Activated T-helper 1 cell treated with anti-CD3 and anti-CD28 coated beads, Interleukin-12 subunit alpha, Interleukin-12 subunit beta, Interleukin-2, Interleukin-4 antibody, amounts not matched to agents 30 ng/mL and 10 ng/mL and 1 ng/mL, durations not matched to agents 14 hours and 24 hours and 36 hours (primary cell): ENCODE measurements at regions of chr3 and their contacts with region 1.

Region 1: DNA sequence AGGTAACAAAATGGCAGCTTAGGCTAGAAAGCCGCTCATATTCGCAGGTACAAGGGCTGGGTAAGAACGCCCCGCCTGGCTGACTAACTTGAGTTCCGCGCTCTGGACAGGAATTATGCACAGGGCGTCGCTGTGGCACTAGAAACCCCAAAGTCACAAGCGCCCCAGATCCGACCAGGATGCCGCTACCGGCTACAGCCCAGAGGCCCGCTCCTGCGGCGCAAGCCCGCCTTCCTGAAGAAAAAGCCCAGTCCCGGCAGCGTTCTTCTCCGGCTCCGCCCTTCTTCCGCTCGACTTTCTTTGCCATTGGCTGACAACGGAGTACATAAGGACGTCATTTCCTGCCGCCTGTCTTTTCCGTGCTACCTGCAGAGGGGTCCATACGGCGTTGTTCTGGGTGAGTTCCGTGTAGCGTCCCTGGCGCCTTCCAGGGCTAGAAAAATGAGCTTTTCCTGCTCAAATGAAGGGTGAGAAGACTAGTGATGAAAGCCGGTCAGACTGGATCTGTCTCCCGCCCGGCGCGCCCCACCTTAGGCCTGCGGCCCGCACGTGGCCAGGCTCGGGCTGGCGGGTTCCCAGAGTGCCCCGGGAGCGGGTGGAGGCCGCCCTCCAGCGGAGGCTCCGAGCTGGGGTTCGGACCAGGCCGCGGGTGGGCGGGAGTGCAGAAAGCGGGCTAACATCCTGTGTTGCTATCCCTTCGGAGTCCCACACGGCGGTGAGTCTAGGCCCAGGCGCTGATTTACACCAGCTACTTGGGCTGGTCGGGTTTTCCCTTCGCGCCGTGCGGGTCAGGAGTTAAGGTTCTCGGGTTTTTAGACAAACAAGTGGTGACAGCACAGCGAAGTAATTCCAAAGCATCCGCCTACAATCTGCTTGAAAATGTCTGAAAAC is at the start of gene RPSA:
- DNase-seq: peak; percentile 97
- H3K4me3 Mint-ChIP-seq: peak within 1 kb of the TSS; percentile 90
- H3K27ac Mint-ChIP-seq: peak within 1 kb of the TSS; percentile 96
- H3K4me1 Mint-ChIP-seq: peaks cover 53% of the 10 kb centered on the region
- H3K27me3 Mint-ChIP-seq: no peaks in the 10 kb centered on the region
- total RNA-seq, gene RPSA: 1,750 and 1,765 TPM in 2 replicates

Region 2: DNA sequence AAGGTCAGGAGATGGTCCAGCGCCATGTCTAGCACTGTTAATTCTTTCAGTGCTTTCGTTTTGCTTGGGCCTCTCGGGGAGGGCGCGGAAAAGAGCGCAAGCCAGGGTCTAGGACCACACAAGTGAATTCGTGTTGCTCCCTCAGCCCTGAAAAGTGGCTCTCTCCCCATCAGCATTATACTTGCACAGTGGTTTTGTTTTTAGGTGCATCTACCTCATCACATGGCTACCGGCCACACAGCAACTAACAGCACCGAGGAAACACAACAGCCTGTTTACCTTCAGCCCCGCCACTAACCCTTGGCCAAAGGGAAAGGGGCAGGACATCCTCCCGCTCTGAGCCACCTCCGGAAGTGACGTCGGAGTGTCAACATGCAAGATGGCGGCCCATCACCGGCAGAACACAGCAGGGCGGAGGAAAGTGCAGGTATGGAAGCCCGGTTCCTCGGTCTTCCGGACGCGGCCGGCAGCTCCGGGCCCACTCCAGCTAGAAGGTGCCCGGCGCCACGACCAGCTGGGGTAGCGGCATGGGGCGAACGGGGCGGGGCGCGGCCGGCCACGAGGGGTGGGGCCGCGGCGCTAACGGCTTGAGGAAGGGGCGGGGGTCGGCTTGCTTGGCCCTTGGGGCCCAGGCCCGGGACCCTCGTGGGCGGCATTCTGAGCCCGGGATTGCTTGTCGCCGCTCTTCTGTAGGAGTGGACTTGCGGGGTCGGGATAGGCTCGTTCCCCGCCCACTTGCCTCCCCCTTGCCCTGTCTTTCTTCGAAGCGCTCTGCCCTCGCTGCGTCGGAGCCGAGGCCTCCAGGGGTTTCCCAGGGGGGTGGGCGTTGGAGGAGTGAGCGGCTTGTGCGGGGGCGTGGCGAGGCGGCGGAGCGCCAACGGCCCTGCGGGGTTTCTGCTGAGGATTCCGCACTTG is 354.7 kb before region 1 on chr3 and contains the starts of genes SCN11A and WDR48:
- intact Hi-C with region 1: loop called (anchors 1 kb)
- DNase-seq: peak; percentile 91
- H3K4me3 Mint-ChIP-seq: peak within 1 kb of the TSS; percentile 93
- H3K27ac Mint-ChIP-seq: peak within 1 kb of the TSS; percentile 95
- H3K4me1 Mint-ChIP-seq: peaks cover 30% of the 10 kb centered on the region
- H3K27me3 Mint-ChIP-seq: no peaks in the 10 kb centered on the region
- total RNA-seq, gene SCN11A: 0.05 TPM in 1 of 2 replicates, not detected in the other
- total RNA-seq, gene WDR48: 40.6 and 41.5 TPM in 2 replicates

Region 3: DNA sequence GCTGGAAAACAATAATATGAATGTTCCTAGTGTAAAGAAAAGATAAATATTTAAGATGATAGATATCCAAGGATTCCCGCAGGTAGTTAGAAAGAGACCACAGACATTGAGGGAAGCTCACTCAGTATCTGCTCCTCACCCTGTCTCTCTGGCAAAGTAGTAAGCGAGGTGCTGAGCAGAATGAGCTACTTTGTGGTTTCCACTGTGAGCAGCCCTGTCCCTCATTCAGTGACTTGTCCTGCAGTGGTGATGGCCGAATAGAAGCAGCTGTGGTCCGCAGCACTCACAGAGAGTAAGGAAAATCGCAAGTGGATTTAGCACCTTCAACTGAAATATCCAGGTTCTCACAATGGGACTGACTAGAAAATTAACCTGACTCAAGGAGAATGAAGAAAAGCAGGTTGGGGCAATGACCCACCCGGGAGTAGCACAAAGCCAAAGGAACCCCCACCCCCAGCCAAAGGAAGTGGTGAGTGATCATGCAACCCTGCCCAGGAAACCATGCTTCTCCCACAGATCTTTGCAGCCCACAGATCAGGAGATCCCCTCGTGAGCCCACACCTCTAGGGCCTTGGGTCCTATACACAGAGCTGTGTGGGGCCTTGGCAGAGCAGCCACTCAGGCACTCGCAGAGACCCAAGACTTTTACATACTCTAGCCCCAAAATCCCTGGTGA is 45.2 kb before region 1 on chr3:
- intact Hi-C with region 1: loop called (anchors 1 kb)
- DNase-seq: peak; percentile 71
- H3K4me3 Mint-ChIP-seq: peak overlapping the region; percentile 69
- H3K27ac Mint-ChIP-seq: peak overlapping the region; percentile 85
- H3K4me1 Mint-ChIP-seq: peaks cover 75% of the 10 kb centered on the region
- H3K27me3 Mint-ChIP-seq: peaks cover 10% of the 10 kb centered on the region

Region 4: DNA sequence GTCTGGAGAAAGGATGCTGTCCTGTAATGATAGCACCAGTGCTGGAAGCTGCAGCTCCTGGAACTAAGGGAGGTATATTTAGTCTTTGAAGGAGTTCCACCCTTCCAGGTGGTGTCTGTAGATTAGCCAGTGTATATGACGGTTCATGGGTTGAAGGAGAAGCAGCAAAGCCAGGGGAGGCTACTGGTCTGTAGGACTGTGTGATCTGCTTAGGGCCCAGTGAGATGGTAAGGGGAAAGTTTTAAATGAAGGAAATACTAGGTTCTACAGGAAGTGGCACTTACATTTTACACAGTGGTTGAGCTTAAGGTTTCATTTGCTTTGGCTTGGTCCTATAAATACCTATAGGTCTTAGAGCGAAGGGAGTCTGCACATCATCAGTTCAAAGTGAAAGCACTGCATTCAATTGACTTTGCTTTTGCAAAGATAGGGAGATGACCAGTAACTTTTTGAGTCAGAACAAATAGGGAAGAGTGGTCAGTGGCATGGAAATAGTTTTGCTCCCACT is 17.8 kb before region 1 on chr3:
- intact Hi-C with region 1: loop called (anchors 1 kb)
- DNase-seq: no peak
- H3K4me3 Mint-ChIP-seq: peak overlapping the region; percentile 53
- H3K27ac Mint-ChIP-seq: peak overlapping the region; percentile 69
- H3K4me1 Mint-ChIP-seq: peaks cover 64% of the 10 kb centered on the region
- H3K27me3 Mint-ChIP-seq: no peaks in the 10 kb centered on the region

Region 5: DNA sequence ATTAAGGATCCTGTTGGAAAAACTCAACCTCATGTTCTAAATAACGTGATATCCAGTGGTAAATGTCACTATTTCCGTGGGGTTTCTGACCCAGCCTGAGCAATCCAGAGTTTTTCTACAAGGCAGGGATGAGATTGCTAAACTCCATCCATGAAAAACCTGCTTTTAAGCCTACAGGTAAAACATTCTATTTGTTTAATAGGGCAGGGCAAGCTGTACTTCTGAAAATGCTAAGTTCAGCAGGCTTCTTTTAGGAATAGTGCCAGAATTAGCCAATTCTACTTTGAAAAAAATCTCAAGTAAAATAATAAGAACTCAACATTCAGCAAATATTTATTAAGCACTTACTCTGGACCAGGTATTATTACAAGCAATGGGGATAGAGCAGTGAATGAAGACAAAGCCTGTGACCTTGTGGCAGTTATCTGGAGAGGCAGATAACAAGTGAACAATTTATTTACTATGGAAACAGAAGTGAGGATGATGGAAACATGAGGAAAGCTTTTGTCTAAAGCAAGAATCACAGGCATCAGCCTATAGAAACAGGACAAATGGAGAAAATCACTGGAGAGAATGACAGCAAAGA is 13.2 kb after region 1 on chr3:
- intact Hi-C with region 1: no loop called
- DNase-seq: no peak
- H3K4me3 Mint-ChIP-seq: no peak overlapping the region
- H3K27ac Mint-ChIP-seq: no peak overlapping the region
- H3K4me1 Mint-ChIP-seq: no peaks in the 10 kb centered on the region
- H3K27me3 Mint-ChIP-seq: peaks cover 6% of the 10 kb centered on the region

Region 6: DNA sequence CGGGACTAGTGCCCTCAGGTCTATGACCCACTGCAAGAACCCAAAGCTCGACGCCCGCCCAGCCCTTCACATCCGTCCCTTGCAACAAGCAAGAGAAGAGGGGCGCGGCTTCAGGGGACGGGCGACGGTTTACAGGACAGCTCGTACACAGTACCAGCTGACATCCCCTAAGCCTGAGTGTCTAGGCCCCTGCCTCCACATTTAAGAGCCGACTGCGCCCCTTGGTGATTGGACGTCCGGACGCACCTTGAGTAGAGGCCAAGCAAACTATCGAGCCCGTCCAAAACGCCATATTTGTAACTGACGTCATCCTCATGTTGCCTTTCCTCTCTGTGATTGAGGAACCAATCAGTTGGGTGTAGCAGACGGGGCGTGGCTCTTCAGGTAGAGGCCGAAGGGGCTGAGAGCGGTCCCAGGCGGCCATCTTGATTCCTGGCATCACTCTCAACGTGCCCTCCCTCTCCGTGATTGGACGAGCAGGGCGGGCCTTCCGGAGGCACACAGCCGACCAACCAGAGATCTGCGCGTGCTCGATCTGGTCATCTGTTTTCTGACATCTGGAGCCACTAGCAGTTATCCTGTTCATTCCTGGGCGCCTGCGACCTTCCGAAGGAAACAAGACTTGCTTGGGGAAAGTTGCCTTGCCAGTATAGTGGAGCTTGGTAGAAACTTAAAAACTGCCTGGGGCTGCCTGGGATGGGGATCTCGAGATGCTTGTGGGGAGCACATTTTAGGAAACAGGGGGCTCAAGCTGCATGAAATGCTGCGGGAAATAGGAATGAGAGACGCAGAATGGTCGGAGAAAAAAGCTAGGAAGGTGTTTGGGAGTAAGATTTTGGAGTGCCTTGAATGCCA is 1046.5 kb after region 1 on chr3:
- intact Hi-C with region 1: loop called (anchors 5 kb)
- DNase-seq: peak; percentile 95
- H3K4me3 Mint-ChIP-seq: peak overlapping the region; percentile 91
- H3K27ac Mint-ChIP-seq: peak overlapping the region; percentile 96
- H3K4me1 Mint-ChIP-seq: peaks cover 40% of the 10 kb centered on the region
- H3K27me3 Mint-ChIP-seq: no peaks in the 10 kb centered on the region